ENCODE measurements at regions of chr20 and their contacts with region 1.

Region 1: GRCh38 chr20:49982346-49983122 is at the start of gene SNAI1:
- DNase-seq: peak; percentile 79
- H3K4me3 Mint-ChIP-seq: peak within 1 kb of the TSS; percentile 59
- H3K27ac Mint-ChIP-seq: peak within 1 kb of the TSS; percentile 67
- H3K4me1 Mint-ChIP-seq: peaks cover 4% of the 10 kb centered on the region
- H3K27me3 Mint-ChIP-seq: peaks cover 26% of the 10 kb centered on the region
- total RNA-seq, gene SNAI1: 3.5 and 3.9 TPM in 2 replicates

Region 2: GRCh38 chr20:49936153-49937027 is 46.1 kb before region 1 on chr20 and contains the start of gene RNF114:
- intact Hi-C with region 1: loop called (anchors 1 kb)
- DNase-seq: peak; percentile 82
- H3K4me3 Mint-ChIP-seq: peak within 1 kb of the TSS; percentile 94
- H3K27ac Mint-ChIP-seq: peak within 1 kb of the TSS; percentile 93
- H3K4me1 Mint-ChIP-seq: peaks cover 34% of the 10 kb centered on the region
- H3K27me3 Mint-ChIP-seq: no peaks in the 10 kb centered on the region
- total RNA-seq, gene RNF114: 58.7 and 60.3 TPM in 2 replicates

Region 3: DNA sequence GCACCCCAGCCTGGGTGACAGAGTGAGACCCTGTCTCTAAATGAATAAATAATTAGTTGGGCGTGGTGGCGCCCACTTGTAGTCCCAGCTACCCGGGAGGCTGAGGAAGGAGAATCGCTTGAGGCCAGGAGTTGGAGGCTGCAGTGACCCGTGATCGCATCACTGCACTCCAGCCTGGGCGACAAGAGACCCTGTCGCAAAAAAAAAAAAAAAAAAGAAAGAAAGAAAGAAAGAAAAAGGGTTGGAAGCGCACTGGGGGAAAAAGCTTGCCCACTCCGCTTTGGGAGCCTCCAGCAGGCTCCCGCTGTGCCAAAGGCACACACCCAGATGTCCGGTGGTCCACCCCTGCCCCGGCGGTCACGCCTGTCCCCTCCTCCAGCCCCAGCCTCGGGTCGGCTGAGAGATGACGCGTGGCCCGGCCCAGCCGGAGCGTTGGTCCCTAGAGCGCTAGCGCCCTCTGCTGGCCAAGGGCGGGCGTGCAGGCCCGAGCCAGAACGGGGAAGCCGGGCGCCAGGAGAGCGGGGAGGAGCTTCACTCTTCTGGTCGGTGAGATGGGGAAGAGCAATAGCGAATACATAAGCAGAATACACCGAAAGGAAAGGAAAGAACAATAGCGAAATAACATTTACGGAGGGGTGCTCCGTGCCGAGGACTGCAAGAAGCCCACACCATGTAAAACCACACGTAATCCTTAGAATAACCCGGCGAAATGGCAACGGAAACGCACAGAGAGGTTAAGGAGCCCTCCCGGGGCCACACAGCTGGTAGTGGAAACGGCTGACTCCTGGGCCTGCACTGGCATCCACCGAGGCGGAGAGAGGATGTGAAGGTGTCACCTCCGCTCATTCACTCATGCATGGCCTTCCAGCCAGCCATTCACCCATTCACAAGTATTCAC is 88.7 kb after region 1 on chr20:
- intact Hi-C with region 1: loop called (anchors 1 kb)
- DNase-seq: peak; percentile 88
- H3K4me3 Mint-ChIP-seq: peak overlapping the region; percentile 56
- H3K27ac Mint-ChIP-seq: no peak overlapping the region
- H3K4me1 Mint-ChIP-seq: peaks cover 6% of the 10 kb centered on the region
- H3K27me3 Mint-ChIP-seq: peaks cover 12% of the 10 kb centered on the region

Region 4: DNA sequence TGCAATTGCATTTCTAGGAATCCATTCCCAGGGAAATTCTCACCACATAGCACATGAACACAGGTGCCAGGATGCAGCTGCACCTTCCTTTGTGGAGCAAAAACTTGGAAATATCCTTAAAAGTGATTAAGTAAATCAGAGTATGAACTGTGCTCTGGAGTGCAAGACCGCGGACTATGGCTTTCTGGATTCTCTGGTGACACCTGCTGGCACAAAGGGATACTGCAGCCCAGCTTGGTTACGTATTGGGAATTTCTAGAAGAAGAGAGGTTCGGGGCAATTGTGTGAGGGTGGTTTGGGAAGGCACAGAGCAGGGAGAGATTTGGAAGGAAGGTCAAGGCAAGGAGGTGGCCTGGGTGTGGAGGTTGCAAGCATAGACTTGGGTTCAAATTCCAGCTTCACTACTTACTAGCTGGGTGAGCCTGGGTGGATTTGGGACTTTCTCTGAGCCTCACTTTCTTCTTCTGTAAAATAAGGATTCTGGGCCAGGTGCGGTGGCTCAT is 186.8 kb after region 1 on chr20:
- intact Hi-C with region 1: loop called (anchors 1 kb)
- DNase-seq: peak; percentile 64
- H3K4me3 Mint-ChIP-seq: no peak overlapping the region
- H3K27ac Mint-ChIP-seq: no peak overlapping the region
- H3K4me1 Mint-ChIP-seq: peaks cover 19% of the 10 kb centered on the region
- H3K27me3 Mint-ChIP-seq: peaks cover 13% of the 10 kb centered on the region

Region 5: DNA sequence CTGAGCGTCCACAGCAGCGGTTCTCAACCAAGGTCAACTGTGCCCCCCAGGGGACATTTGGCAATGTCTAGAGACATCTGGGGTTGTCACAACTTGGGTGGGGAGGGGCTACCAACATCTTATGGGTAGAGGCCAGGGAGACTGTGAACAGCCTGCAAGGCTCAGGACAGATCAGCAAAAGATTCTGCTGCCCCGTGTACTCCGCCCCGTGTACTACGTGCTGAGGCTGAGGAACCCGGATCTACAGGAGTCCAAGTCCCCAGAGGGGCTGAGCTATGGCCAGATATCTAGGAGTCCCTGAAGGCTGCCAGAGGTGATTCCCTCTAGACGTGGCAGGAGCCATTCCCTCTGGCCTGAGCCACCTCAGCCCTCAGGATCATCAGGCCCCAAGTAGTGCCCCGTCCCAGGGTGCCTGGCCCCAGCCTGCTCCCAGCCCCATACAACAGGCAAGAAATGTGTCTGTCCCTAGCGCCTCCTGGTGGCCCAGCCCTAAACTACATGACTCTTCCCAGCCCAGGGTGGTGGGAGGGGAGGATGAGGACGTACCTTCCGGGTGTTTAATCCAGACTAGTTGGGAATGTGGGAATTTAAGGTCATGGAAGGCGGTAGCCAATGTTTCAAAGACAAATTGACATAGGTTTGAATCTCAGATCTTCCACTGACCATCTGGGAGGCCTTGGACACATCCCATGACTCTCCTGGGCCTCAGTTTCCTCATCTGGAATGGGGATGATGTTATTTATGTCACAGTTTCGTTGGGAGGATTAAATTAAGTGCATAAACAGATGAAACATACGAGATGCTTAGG is 478.1 kb after region 1 on chr20:
- intact Hi-C with region 1: loop called (anchors 5 kb)
- DNase-seq: peak; percentile 76
- H3K4me3 Mint-ChIP-seq: no peak overlapping the region
- H3K27ac Mint-ChIP-seq: no peak overlapping the region
- H3K4me1 Mint-ChIP-seq: peaks cover 25% of the 10 kb centered on the region
- H3K27me3 Mint-ChIP-seq: peaks cover 4% of the 10 kb centered on the region

Measured in activated T-helper 1 cell treated with anti-CD3 and anti-CD28 coated beads, Interleukin-12 subunit alpha, Interleukin-12 subunit beta, Interleukin-2, Interleukin-4 antibody, amounts not matched to agents 30 ng/mL and 10 ng/mL and 1 ng/mL, durations not matched to agents 14 hours and 24 hours and 36 hours (primary cell).